Heart left ventricle (tissue), 16 donors: ENCODE measurements at regions of chr7 and their contacts with region 1.

Region 1: DNA sequence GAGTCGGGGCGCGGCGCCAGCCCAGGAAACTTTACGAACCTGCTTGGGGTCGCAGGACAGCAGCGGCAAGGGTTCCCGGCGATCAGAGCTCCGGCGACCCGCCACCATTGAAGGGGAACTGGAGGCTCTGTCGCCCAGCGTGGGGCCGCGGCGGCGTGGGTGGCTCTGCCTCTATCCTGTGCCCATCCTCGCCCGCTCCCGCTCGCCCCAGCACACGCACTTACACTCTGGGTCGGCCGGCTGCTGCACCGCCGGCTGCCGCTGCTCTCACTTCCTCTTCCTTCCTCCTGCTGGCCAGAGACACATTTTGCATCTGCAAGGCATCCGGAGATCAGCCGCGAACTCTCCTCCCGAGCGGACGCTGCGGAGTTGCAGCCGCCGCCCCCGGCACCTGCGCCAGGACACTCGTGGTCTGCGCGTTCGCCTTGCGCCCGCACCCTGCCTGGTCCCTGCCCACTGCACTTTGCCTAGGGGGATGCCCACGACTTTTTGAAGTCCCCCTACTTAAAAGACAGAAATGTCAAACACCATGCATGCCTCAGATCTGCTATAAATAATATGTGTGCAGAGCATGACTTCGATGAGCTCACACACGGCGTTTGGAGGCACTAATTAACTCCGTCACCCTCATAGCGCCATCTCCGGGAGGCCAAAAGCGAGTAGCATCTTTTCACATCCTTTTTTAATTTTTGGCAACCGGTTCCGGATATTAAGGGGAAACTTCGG is at the start of gene ELMO1:
- DNase-seq: peak; percentile 79 to 91 (median 80)
- ATAC-seq: peak; percentile 59 to 90 (median 84)
- H3K4me3 ChIP-seq: peak within 1 kb of the TSS; percentile 68 to 95 (median 86)
- H3K27ac ChIP-seq: peak within 1 kb of the TSS; percentile 83 to 97 (median 93)
- H3K4me1 ChIP-seq: peaks cover 0 to 46% (median 14%) of the 10 kb centered on the region in 12 donors
- H3K27me3 ChIP-seq: peaks cover 0 to 18% (median 0%) of the 10 kb centered on the region in 9 donors
- CTCF ChIP-seq: peak in 11 of 12 donors; percentile 28 to 59 (median 47)
- POLR2A ChIP-seq: peak in 1 of 2 donors; percentile 67
- total RNA-seq, gene ELMO1: 9.8 to 38.6 (median 15.3) TPM

Region 2: DNA sequence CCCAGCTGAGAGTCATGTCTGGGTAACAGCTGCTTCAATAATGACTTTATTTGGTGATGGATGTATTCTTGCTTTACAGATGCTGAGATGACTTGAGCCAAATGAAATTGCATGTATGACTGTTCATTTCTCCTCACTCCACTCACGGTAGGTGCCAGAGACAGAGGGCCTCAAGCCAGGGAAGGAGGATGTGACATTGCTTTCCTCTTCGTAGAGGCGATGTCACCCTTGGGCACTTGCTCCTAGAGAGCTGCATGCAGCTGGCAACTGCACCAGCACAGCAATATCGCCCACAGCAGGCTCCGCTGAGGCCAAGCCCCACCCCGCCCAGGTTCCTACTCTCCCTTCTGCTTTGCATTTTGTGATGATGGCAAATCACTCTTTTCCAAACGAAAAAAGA is 607.9 kb before region 1 on chr7:
- intact Hi-C with region 1: no loop called
- DNase-seq: no peak
- ATAC-seq: no peak
- H3K4me3 ChIP-seq: no peak overlapping the region
- H3K27ac ChIP-seq: no peak overlapping the region
- H3K4me1 ChIP-seq: no peaks in the 10 kb centered on the region
- H3K27me3 ChIP-seq: no peaks in the 10 kb centered on the region
- CTCF ChIP-seq: no peak
- POLR2A ChIP-seq: no peak

Region 3: DNA sequence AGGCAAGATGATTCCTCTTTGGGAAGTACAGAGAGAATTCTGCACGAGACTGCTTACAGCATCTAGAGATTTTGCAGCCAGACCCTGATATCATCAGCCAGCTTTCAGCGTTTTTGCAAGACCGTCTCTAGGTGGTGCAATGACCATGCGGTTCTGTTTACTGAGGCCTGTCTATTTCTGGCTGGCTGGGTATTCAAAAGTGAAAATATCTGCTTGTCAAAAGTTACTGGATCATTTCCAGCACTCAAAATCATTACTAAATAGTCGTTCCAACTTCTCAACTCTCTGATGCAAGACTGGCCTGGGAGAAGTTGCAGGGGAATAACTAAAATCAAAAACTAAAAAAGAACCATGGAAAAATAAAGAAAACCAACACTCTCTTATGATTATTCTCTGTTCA is 240.3 kb before region 1 on chr7:
- intact Hi-C with region 1: loop called in 4 of 10 experiments (anchors 2 to 10 kb)
- DNase-seq: peak in 4 of 5 donors; percentile 73 to 76 (median 74)
- ATAC-seq: peak; percentile 85 to 93 (median 90)
- H3K4me3 ChIP-seq: no peak overlapping the region
- H3K27ac ChIP-seq: peak overlapping the region; percentile 6 to 75 (median 56)
- H3K4me1 ChIP-seq: peaks cover 0 to 33% (median 22%) of the 10 kb centered on the region in 12 donors
- H3K27me3 ChIP-seq: no peaks in the 10 kb centered on the region
- CTCF ChIP-seq: peak; percentile 51 to 82 (median 59)
- POLR2A ChIP-seq: no peak

Region 4: GRCh38 chr7:37284805-37285231 is 164.0 kb before region 1 on chr7:
- intact Hi-C with region 1: loop called in 8 of 10 experiments (anchors 2 to 10 kb)
- DNase-seq: peak; percentile 38 to 68 (median 53)
- ATAC-seq: peak in 3 of 4 donors; percentile 18 to 60 (median 49)
- H3K4me3 ChIP-seq: no peak overlapping the region
- H3K27ac ChIP-seq: peak overlapping the region in 2 of 12 donors; percentile 21 to 47
- H3K4me1 ChIP-seq: peaks cover 7 to 72% (median 39%) of the 10 kb centered on the region in 12 donors
- H3K27me3 ChIP-seq: no peaks in the 10 kb centered on the region
- CTCF ChIP-seq: peak; percentile 62 to 87 (median 72)
- POLR2A ChIP-seq: no peak

Region 5: GRCh38 chr7:37336259-37336658 is 112.5 kb before region 1 on chr7:
- intact Hi-C with region 1: no loop called
- DNase-seq: no peak
- ATAC-seq: peak in 3 of 4 donors; percentile 33 to 70 (median 38)
- H3K4me3 ChIP-seq: peak overlapping the region in 1 of 12 donors; percentile 1
- H3K27ac ChIP-seq: peak overlapping the region in 1 of 12 donors; percentile 40
- H3K4me1 ChIP-seq: peaks cover 0 to 63% (median 15%) of the 10 kb centered on the region in 12 donors
- H3K27me3 ChIP-seq: no peaks in the 10 kb centered on the region
- CTCF ChIP-seq: no peak
- POLR2A ChIP-seq: no peak

Region 6: GRCh38 chr7:37385787-37386186 is 63.0 kb before region 1 on chr7:
- intact Hi-C with region 1: loop called in 3 of 10 experiments (anchors 2 to 10 kb)
- DNase-seq: peak in 3 of 5 donors; percentile 27 to 60 (median 45)
- ATAC-seq: peak; percentile 40 to 70 (median 50)
- H3K4me3 ChIP-seq: no peak overlapping the region
- H3K27ac ChIP-seq: peak overlapping the region in 6 of 12 donors; percentile 9 to 51 (median 34)
- H3K4me1 ChIP-seq: peaks cover 0 to 51% (median 16%) of the 10 kb centered on the region in 12 donors
- H3K27me3 ChIP-seq: no peaks in the 10 kb centered on the region
- CTCF ChIP-seq: no peak
- POLR2A ChIP-seq: no peak

Region 7: GRCh38 chr7:37408291-37409228 is 40.2 kb before region 1 on chr7:
- intact Hi-C with region 1: loop called in 3 of 10 experiments (anchors 5 kb)
- DNase-seq: no peak
- ATAC-seq: peak in 1 of 4 donors; percentile 14
- H3K4me3 ChIP-seq: peak overlapping the region in 1 of 12 donors; percentile 15
- H3K27ac ChIP-seq: peak overlapping the region in 5 of 12 donors; percentile 11 to 70 (median 14)
- H3K4me1 ChIP-seq: peaks cover 0 to 79% (median 26%) of the 10 kb centered on the region in 12 donors
- H3K27me3 ChIP-seq: no peaks in the 10 kb centered on the region
- CTCF ChIP-seq: no peak
- POLR2A ChIP-seq: no peak

Region 8: DNA sequence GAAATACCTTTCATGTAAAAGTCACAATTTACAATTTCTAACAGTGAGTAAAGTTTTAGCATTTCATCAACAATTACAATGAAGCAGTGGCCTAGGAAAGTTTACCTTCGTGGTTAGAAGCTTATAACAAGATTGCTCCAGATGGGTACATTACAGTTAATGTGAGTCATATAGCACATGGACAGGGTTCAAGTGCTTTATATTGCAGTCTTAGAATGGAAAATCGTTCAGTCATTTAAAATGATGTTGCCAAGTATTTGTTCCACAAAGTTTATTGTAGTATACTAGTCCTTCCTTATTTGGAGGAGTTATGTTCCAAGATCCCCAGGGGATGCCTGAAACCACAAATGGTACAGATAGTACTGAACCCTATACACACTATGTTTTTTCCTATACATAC is 999.3 kb after region 1 on chr7:
- intact Hi-C with region 1: no loop called
- DNase-seq: no peak
- ATAC-seq: no peak
- H3K4me3 ChIP-seq: no peak overlapping the region
- H3K27ac ChIP-seq: no peak overlapping the region
- H3K4me1 ChIP-seq: peaks cover 0 to 13% (median 7%) of the 10 kb centered on the region in 12 donors
- H3K27me3 ChIP-seq: no peaks in the 10 kb centered on the region
- CTCF ChIP-seq: no peak
- POLR2A ChIP-seq: no peak